ENCODE measurements at regions of chr4 and their contacts with region 1.

Region 1: DNA sequence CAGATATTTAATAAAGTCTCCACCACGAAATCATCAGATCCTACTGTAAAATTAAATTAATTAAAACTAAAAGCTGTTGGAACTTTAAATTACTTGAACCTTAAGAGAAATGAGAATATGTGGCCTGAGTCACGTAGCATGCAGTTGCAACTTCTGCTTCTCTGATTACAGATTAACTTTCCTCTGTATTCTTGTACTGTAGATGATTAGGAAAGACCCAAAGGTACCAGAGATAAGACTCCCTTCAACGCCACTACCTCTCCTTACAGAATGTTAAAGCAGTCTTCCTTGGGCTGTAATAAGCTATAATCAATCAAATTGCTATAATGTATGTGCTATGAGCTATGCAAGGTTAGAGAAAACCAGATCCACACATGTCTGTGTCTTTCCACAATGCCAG is 47.9 kb downstream of the FAM13A start:
- DNase-seq: no peak
- ATAC-seq: no peak
- H3K4me3 ChIP-seq: no peak overlapping the region
- H3K27ac ChIP-seq: no peak overlapping the region
- H3K4me1 ChIP-seq: no peaks in the 10 kb centered on the region
- H3K27me3 ChIP-seq: no peaks in the 10 kb centered on the region
- CTCF ChIP-seq: no peak
- POLR2A ChIP-seq: no peak

Region 2: DNA sequence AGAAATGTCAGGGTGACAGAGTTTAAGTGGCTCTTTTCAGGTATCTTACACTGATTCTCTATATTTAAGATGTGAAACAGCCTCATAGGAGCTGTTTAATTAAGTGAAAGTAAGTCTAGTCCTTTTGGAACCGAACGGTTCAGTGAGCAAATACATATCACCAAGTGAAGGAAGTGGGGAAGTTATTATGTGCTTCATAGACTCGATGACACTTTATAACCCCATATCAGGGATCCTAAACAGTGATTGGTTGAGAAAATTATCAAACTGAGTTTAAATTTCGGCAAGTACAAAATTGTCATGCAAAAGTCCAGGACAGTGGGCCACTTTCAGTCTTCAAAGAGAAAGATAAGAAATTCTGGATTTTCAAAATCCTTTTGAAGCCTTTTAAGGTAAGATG is 1400.9 kb before region 1 on chr4 and contains the start of gene DSPP:
- in situ Hi-C with region 1: no loop called
- intact Hi-C with region 1: no loop called
- DNase-seq: no peak
- ATAC-seq: no peak
- H3K4me3 ChIP-seq: no peak within 1 kb of the TSS
- H3K27ac ChIP-seq: no peak within 1 kb of the TSS
- H3K4me1 ChIP-seq: no peaks in the 10 kb centered on the region
- H3K27me3 ChIP-seq: no peaks in the 10 kb centered on the region
- CTCF ChIP-seq: no peak
- POLR2A ChIP-seq: no peak
- total RNA-seq, gene DSPP: not detected

Region 3: GRCh38 chr4:88017516-88018297 is 991.4 kb before region 1 on chr4:
- in situ Hi-C with region 1: no loop called
- intact Hi-C with region 1: no loop called
- DNase-seq: peak; percentile 18 to 35
- ATAC-seq: peak; percentile 98 to 99
- H3K4me3 ChIP-seq: peak overlapping the region in 2 of 4 donors; percentile 12 to 36
- H3K27ac ChIP-seq: peak overlapping the region; percentile 72 to 85 (median 78)
- H3K4me1 ChIP-seq: peaks cover 10 to 21% of the 10 kb centered on the region in 2 donors
- H3K27me3 ChIP-seq: no peaks in the 10 kb centered on the region
- CTCF ChIP-seq: no peak
- POLR2A ChIP-seq: peak in 1 of 2 donors; percentile 21

Region 4: GRCh38 chr4:88628759-88629158 is 380.4 kb before region 1 on chr4:
- in situ Hi-C with region 1: no loop called
- intact Hi-C with region 1: loop called (anchors 5 kb)
- DNase-seq: no peak
- ATAC-seq: no peak
- H3K4me3 ChIP-seq: no peak overlapping the region
- H3K27ac ChIP-seq: no peak overlapping the region
- H3K4me1 ChIP-seq: peaks cover 0 to 18% of the 10 kb centered on the region in 2 donors
- H3K27me3 ChIP-seq: no peaks in the 10 kb centered on the region
- CTCF ChIP-seq: no peak
- POLR2A ChIP-seq: no peak

Measured in gastrocnemius medialis (tissue), 4 donors.